Mammary epithelial cell (primary cell): ENCODE measurements at regions of chr17 and their contacts with region 1.

Region 1: DNA sequence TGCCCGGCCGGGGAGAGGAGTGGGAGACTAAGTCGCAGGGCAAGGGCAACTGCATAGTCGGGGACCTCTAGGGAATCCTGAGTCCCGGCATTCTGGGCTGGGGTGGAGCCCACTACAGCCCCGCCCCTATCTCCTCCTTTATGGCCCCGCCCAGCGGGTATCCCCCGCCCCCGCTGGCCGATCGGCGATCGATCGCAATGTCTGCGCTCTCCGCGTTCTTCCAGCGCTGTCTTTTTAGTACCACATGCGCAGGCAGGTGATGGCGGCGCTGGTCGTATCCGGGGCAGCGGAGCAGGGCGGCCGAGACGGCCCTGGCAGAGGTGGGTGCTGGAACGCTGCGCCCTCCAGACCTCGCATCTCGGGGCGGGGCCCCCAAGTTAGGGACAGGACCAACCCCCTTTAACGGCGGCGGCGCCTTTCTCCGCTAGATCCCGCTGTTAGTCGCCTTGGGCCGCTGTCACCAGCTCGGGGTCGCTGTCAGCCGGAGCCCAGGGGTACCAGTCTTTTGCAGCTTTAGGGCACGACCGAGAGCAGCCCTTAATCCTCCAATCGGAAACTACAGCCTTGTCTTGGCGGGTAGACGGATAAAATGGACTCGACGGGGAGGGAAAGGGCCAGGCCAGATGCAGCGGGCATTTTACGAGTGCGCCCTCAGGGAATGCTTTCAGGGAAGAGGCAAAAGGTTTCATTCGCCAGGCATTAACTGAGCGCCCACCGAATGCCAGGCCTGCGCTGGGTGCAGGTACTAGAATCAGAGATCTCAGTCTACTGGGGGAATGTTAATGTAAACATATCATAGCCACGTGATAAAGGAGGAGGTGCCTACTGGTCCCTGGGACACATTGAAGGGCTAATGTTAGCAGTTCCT is at the start of gene DPH1:
- DNase-seq: peak; percentile 84
- H3K4me3 ChIP-seq: peak within 1 kb of the TSS; percentile 95 to 99 (median 97)
- H3K27ac ChIP-seq: peak within 1 kb of the TSS; percentile 78
- H3K4me1 ChIP-seq: peaks cover 10% of the 10 kb centered on the region
- H3K27me3 ChIP-seq: no peaks in the 10 kb centered on the region
- CTCF ChIP-seq: no peak
- total RNA-seq, gene DPH1: 29.0 to 36.2 TPM

Region 2: GRCh38 chr17:1882836-1883235 is 147.3 kb before region 1 on chr17:
- CTCF ChIA-PET with region 1: no interaction called
- dilution Hi-C with region 1: loop called (anchors 5 kb)
- in situ Hi-C with region 1: no loop called
- intact Hi-C with region 1: loop called (anchors 1 kb)
- DNase-seq: peak; percentile 15
- H3K4me3 ChIP-seq: no peak overlapping the region
- H3K27ac ChIP-seq: no peak overlapping the region
- H3K4me1 ChIP-seq: no peaks in the 10 kb centered on the region
- H3K27me3 ChIP-seq: no peaks in the 10 kb centered on the region
- CTCF ChIP-seq: peak; percentile 40 to 47

Region 3: GRCh38 chr17:1908699-1909309 is 121.3 kb before region 1 on chr17:
- CTCF ChIA-PET with region 1: interaction called, 32 read pairs
- dilution Hi-C with region 1: no loop called
- in situ Hi-C with region 1: loop called (anchors 5 kb)
- intact Hi-C with region 1: loop called (anchors 1 kb)
- DNase-seq: peak; percentile 54
- H3K4me3 ChIP-seq: no peak overlapping the region
- H3K27ac ChIP-seq: no peak overlapping the region
- H3K4me1 ChIP-seq: peaks cover 6% of the 10 kb centered on the region
- H3K27me3 ChIP-seq: peaks cover 2% of the 10 kb centered on the region
- CTCF ChIP-seq: peak; percentile 49 to 81

Region 4: DNA sequence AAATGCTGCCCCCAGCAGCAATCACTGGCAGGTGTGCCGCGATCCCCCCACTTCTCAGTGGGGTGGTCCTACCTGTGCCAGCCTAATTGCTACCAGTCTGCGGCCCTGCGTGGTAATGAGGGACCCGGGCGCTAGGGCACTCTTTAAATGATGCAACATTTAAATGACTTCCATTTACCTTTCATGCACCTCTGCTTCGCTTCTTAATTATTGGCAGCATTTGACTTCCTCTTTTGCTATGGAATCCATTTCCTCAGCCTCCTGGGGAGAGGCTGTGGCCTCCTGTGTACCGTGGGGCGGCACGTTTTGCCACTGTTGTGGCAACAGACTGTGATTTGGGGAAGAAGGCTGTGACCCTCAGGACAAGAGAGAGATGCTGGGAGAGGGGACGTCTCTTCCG is 114.3 kb before region 1 on chr17:
- CTCF ChIA-PET with region 1: no interaction called
- dilution Hi-C with region 1: loop called (anchors 5 kb)
- in situ Hi-C with region 1: no loop called
- intact Hi-C with region 1: no loop called
- DNase-seq: no peak
- H3K4me3 ChIP-seq: no peak overlapping the region
- H3K27ac ChIP-seq: no peak overlapping the region
- H3K4me1 ChIP-seq: no peaks in the 10 kb centered on the region
- H3K27me3 ChIP-seq: no peaks in the 10 kb centered on the region
- CTCF ChIP-seq: no peak

Region 5: GRCh38 chr17:1989135-1989534 is 41.0 kb before region 1 on chr17:
- CTCF ChIA-PET with region 1: no interaction called
- dilution Hi-C with region 1: no loop called
- in situ Hi-C with region 1: no loop called
- intact Hi-C with region 1: loop called (anchors 2 kb)
- DNase-seq: peak; percentile 94
- H3K4me3 ChIP-seq: no peak overlapping the region
- H3K27ac ChIP-seq: peak overlapping the region; percentile 85
- H3K4me1 ChIP-seq: peaks cover 13% of the 10 kb centered on the region
- H3K27me3 ChIP-seq: no peaks in the 10 kb centered on the region
- CTCF ChIP-seq: no peak

Region 6: GRCh38 chr17:2087597-2088211 is 57.6 kb after region 1 on chr17:
- CTCF ChIA-PET with region 1: no interaction called
- dilution Hi-C with region 1: loop called (anchors 5 kb)
- in situ Hi-C with region 1: no loop called
- intact Hi-C with region 1: no loop called
- DNase-seq: no peak
- H3K4me3 ChIP-seq: no peak overlapping the region
- H3K27ac ChIP-seq: no peak overlapping the region
- H3K4me1 ChIP-seq: peaks cover 32% of the 10 kb centered on the region
- H3K27me3 ChIP-seq: no peaks in the 10 kb centered on the region
- CTCF ChIP-seq: no peak